ENCODE measurements at regions of chr2 and their contacts with region 1.

Region 1: DNA sequence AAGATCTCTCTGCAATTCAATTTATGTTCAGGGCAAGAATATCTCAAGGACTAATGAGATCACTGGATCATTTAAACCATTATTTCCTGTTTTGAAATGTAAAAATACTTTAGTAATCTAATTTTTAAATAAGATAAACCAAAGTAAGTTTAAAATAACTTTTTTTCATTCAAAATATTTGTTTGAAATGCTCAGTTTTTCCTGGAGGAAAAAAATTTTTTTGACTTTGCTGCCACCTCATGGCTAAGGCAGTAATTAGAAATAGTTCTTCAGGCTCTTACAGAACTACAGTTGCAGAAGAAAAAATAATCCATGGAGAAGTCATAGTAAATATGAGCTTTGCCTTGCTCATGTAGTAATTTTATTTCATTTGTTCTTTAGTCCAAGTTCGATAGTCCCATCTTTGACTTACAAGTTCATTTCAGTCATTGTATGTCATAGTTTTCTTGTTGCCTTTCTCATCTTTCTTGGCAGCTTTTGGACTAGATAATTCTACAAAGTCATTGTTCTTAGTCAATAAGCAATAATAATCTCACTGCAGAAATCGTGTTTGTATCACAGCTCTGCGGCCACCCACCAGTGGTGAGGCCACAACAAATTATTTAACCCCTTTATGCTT is 127.4 kb downstream of the DPP4 start:
- DNase-seq: no peak
- H3K4me3 Mint-ChIP-seq: no peak overlapping the region
- H3K27ac Mint-ChIP-seq: no peak overlapping the region
- H3K4me1 Mint-ChIP-seq: peaks cover 34% of the 10 kb centered on the region
- H3K27me3 Mint-ChIP-seq: peaks cover 2% of the 10 kb centered on the region

Region 2: DNA sequence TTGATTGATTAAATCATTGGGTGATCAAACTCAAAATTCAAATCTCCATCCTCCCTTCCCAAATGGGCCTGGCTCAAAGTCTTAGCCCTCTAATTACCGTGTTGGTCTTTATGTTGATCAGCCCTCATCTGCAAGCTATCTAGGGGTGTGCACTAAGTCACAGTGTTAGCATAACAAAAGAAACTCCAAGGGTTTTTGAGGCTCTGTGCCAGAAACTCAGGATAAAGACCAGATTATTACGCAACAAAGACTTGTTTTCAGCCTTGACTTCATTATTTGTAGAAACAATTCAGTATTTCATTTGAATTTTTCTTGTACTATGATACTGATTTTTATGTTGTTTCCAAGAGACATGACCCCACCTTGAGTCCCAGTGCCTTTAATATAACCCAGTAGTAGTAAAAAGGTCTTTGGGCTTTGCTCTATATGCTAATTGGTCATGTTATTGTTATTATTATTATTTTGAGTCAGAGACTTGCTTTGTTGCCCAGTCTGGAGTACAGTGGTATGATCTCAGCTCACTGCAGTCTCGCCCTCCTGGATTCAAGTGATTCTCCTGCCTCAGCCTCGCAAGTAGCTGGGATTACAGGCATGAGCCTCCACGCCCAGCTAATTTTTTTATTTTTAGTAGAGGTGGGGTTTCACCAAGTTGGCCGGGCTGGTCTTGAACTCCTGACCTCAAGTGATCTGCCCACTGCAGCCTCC is 624.5 kb before region 1 on chr2:
- CTCF ChIA-PET with region 1: no interaction called
- POLR2A ChIA-PET with region 1: no interaction called
- DNase-seq: no peak
- H3K4me3 Mint-ChIP-seq: no peak overlapping the region
- H3K27ac Mint-ChIP-seq: no peak overlapping the region
- H3K4me1 Mint-ChIP-seq: peaks cover 6% of the 10 kb centered on the region
- H3K27me3 Mint-ChIP-seq: no peaks in the 10 kb centered on the region

Region 3: DNA sequence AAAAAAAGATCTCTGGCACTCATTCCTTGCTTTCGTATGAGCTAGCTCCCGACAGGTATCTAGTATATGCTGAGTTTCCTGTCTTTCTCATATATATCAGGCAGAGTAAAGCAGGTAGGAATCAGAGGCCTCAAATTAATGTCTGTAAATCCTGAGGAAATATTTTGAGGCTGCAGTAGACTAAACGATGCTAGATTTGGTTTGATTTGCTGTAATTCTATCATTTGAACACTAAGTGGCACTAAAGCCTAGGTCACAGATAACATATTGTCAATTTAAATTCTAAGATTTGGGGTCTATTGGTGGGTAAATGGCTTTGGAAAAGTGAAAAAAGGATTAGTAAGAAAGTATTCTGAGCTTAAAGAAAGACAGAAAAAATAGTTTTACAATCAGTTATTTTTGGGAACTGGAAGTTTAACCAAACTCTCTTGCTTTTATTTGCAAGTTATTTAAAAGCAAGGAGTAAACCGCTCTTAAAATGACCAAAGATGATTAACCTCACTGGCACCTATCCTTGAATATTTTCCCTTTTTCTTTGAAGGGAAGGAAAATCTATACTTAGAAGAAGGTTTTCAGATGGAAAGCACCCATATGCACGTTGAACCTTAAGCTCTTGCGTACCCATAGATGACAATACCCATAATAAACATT is 360.0 kb before region 1 on chr2:
- CTCF ChIA-PET with region 1: interaction called, 61 read pairs
- POLR2A ChIA-PET with region 1: interaction called, 5 read pairs
- DNase-seq: no peak
- H3K4me3 Mint-ChIP-seq: no peak overlapping the region
- H3K27ac Mint-ChIP-seq: no peak overlapping the region
- H3K4me1 Mint-ChIP-seq: no peaks in the 10 kb centered on the region
- H3K27me3 Mint-ChIP-seq: no peaks in the 10 kb centered on the region

Region 4: GRCh38 chr2:161592713-161593112 is 353.9 kb before region 1 on chr2:
- CTCF ChIA-PET with region 1: interaction called, 61 read pairs
- POLR2A ChIA-PET with region 1: no interaction called
- DNase-seq: no peak
- H3K4me3 Mint-ChIP-seq: no peak overlapping the region
- H3K27ac Mint-ChIP-seq: peak overlapping the region; percentile 13
- H3K4me1 Mint-ChIP-seq: peaks cover 18% of the 10 kb centered on the region
- H3K27me3 Mint-ChIP-seq: peaks cover 4% of the 10 kb centered on the region

Region 5: GRCh38 chr2:161979490-161979889 is 32.9 kb after region 1 on chr2:
- CTCF ChIA-PET with region 1: no interaction called
- POLR2A ChIA-PET with region 1: no interaction called
- DNase-seq: no peak
- H3K4me3 Mint-ChIP-seq: no peak overlapping the region
- H3K27ac Mint-ChIP-seq: peak overlapping the region; percentile 45
- H3K4me1 Mint-ChIP-seq: peaks cover 65% of the 10 kb centered on the region
- H3K27me3 Mint-ChIP-seq: no peaks in the 10 kb centered on the region

Region 6: GRCh38 chr2:162123806-162124758 is 177.5 kb after region 1 on chr2:
- CTCF ChIA-PET with region 1: interaction called, 34 read pairs
- POLR2A ChIA-PET with region 1: no interaction called
- DNase-seq: no peak
- H3K4me3 Mint-ChIP-seq: no peak overlapping the region
- H3K27ac Mint-ChIP-seq: no peak overlapping the region
- H3K4me1 Mint-ChIP-seq: peaks cover 28% of the 10 kb centered on the region
- H3K27me3 Mint-ChIP-seq: no peaks in the 10 kb centered on the region